ENCODE measurements at regions of chr21 and their contacts with region 1.

Region 1: GRCh38 chr21:43916691-43917514 is 51.9 kb downstream of the AGPAT3 start:
- DNase-seq: no peak
- H3K4me3 ChIP-seq: no peak overlapping the region
- H3K4me3 Mint-ChIP-seq: no peak overlapping the region
- H3K27ac Mint-ChIP-seq: no peak overlapping the region
- H3K4me1 ChIP-seq: peaks cover 20% of the 10 kb centered on the region
- H3K4me1 Mint-ChIP-seq: peaks cover 16% of the 10 kb centered on the region
- H3K27me3 ChIP-seq: no peaks in the 10 kb centered on the region
- H3K27me3 Mint-ChIP-seq: no peaks in the 10 kb centered on the region
- CTCF ChIP-seq: no peak

Region 2: DNA sequence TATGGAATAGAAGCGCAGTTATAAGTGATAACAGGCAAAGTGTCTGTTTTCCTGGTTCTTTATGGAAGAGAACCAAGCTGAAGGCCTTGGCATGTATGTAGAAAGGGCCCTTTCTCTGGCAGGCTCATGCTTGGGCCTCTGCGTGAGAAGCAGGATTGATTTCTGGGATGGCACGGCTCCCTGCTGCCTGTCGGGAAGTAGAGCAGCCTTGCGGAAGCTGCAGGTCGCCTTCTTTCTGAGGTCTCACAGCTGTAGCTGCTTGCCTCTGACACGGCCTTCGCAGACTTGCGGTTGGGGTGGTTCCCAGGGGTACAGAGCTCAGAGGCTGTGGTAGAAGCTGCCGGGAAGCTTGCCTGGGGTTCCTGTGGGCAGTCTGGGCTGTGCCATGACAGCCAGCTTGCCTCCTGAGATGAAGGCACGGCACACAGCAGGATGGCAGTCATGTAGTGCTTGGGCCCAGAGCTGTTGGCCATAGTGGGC is 134.6 kb after region 1 on chr21:
- CTCF ChIA-PET with region 1: no interaction called
- POLR2A ChIA-PET with region 1: no interaction called
- intact Hi-C with region 1: no loop called
- DNase-seq: no peak
- H3K4me3 ChIP-seq: no peak overlapping the region
- H3K4me3 Mint-ChIP-seq: no peak overlapping the region
- H3K27ac Mint-ChIP-seq: no peak overlapping the region
- H3K4me1 ChIP-seq: no peaks in the 10 kb centered on the region
- H3K4me1 Mint-ChIP-seq: peaks cover 7% of the 10 kb centered on the region
- H3K27me3 ChIP-seq: no peaks in the 10 kb centered on the region
- H3K27me3 Mint-ChIP-seq: no peaks in the 10 kb centered on the region
- CTCF ChIP-seq: no peak

Region 3: DNA sequence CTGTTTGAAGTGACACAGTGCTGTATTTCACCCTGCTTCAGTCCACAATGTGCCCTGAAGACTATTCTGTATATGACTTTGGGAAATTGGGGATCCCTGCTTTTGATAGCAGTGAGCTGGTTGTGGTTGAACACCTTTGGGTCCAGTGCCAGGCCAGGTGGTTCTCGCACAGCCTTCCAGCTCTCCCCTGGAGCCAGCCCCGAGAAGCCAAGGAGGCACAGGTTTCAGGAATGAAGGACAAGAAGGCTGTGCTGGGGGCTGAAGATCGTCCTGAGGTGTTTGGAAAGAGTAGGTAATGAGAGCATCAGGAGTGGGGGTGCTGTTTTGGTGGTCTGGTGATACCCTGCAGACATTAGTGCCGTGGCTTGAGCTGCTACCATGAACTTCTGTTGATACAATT is 1933.3 kb after region 1 on chr21:
- CTCF ChIA-PET with region 1: interaction called, 13 read pairs
- POLR2A ChIA-PET with region 1: no interaction called
- intact Hi-C with region 1: no loop called
- DNase-seq: no peak
- H3K4me3 ChIP-seq: no peak overlapping the region
- H3K4me3 Mint-ChIP-seq: no peak overlapping the region
- H3K27ac Mint-ChIP-seq: no peak overlapping the region
- H3K4me1 ChIP-seq: 0 out of 2 replicates have a peak, but pooled peaks cover 3% of the 10 kb centered on the region
- H3K4me1 Mint-ChIP-seq: no peaks in the 10 kb centered on the region
- H3K27me3 ChIP-seq: peaks cover 2% of the 10 kb centered on the region
- H3K27me3 Mint-ChIP-seq: peaks cover 34% of the 10 kb centered on the region
- CTCF ChIP-seq: no peak